PC-9 (cell line): ENCODE measurements at regions of chr2 and their contacts with region 1.

Region 1: DNA sequence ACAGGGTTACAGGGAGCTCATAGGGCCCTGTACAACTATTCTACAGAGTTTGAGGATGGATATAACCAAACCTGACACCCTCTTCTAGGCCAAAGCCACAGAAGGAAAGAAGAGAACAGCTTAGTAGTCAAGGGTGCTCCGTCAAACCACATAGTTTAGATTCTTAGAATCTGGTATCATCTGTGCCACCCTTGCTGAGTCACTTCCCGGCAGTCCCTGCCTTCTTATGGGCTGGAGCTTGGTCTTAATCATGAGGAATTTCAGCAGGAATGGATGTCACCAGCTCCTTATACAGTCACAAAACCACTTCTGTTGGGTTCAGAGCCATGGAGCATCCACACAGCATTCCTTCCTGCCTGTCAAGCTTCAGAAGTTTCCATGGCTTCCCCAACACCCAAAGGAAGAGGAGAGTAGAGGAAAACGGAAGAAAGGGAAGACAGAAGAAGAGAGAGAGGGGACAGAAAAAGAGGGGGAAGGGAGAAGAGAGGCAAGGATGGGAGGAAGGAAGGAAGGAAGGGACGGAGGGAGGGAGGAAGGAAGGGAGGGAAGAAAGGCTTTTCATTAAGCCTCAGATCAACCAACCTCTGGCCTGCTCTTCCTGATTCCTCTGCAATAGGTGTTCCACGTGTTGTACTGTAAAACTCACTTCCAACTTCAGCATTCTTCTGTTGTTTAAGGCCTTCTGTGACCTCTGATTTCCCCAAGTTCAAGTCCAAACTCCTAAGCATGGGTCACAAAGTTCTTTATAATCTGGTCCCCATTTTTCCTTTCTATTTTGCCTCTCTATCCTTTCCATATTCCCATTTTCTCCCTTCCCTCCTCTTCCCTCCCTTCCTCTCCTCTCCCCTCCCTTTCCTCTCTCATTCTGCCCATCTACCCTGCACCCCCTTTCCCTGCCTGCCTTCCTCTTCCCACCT is 246.1 kb upstream of the TNP1 start:
- DNase-seq: peak; percentile 79 to 95
- H3K4me3 ChIP-seq: no peak overlapping the region
- H3K27ac ChIP-seq: peak overlapping the region; percentile 94
- H3K4me1 ChIP-seq: peaks cover 61% of the 10 kb centered on the region
- H3K27me3 ChIP-seq: no peaks in the 10 kb centered on the region
- CTCF ChIP-seq: no peak

Region 2: GRCh38 chr2:216698895-216699294 is 407.1 kb before region 1 on chr2:
- CTCF ChIA-PET with region 1: interaction called, 4 read pairs
- POLR2A ChIA-PET with region 1: no interaction called
- intact Hi-C with region 1: loop called (anchors 5 kb)
- DNase-seq: no peak
- H3K4me3 ChIP-seq: no peak overlapping the region
- H3K27ac ChIP-seq: no peak overlapping the region
- H3K4me1 ChIP-seq: 0 out of 2 replicates have a peak, but pooled peaks cover 3% of the 10 kb centered on the region
- H3K27me3 ChIP-seq: no peaks in the 10 kb centered on the region
- CTCF ChIP-seq: peak; percentile 67

Region 3: GRCh38 chr2:217086038-217086522 is 19.9 kb before region 1 on chr2:
- CTCF ChIA-PET with region 1: no interaction called
- POLR2A ChIA-PET with region 1: interaction called, 11 read pairs
- intact Hi-C with region 1: no loop called
- DNase-seq: no peak
- H3K4me3 ChIP-seq: no peak overlapping the region
- H3K27ac ChIP-seq: no peak overlapping the region
- H3K4me1 ChIP-seq: 0 out of 2 replicates have a peak, but pooled peaks cover 6% of the 10 kb centered on the region
- H3K27me3 ChIP-seq: no peaks in the 10 kb centered on the region
- CTCF ChIP-seq: no peak

Region 4: GRCh38 chr2:217277646-217278398 is 171.8 kb after region 1 on chr2:
- CTCF ChIA-PET with region 1: no interaction called
- POLR2A ChIA-PET with region 1: interaction called, 3 read pairs
- intact Hi-C with region 1: loop called (anchors 10 kb)
- DNase-seq: peak; percentile 66 to 74
- H3K4me3 ChIP-seq: no peak overlapping the region
- H3K27ac ChIP-seq: peak overlapping the region; percentile 25; the same call in 1 of the 2 replicates
- H3K4me1 ChIP-seq: peaks cover 25% of the 10 kb centered on the region; the same call in 1 of the 2 replicates
- H3K27me3 ChIP-seq: no peaks in the 10 kb centered on the region
- CTCF ChIP-seq: no peak

Region 5: GRCh38 chr2:217360781-217361482 is 254.9 kb after region 1 on chr2:
- CTCF ChIA-PET with region 1: interaction called, 4 read pairs
- POLR2A ChIA-PET with region 1: no interaction called
- intact Hi-C with region 1: loop called (anchors 2 kb)
- DNase-seq: peak; percentile 37 to 89
- H3K4me3 ChIP-seq: no peak overlapping the region
- H3K27ac ChIP-seq: peak overlapping the region; percentile 55
- H3K4me1 ChIP-seq: peaks cover 49% of the 10 kb centered on the region
- H3K27me3 ChIP-seq: no peaks in the 10 kb centered on the region
- CTCF ChIP-seq: no peak

Region 6: GRCh38 chr2:218229239-218229638 is 1123.2 kb after region 1 on chr2:
- CTCF ChIA-PET with region 1: interaction called, 12 read pairs
- POLR2A ChIA-PET with region 1: no interaction called
- intact Hi-C with region 1: no loop called
- DNase-seq: peak; percentile 33 to 83
- H3K4me3 ChIP-seq: no peak overlapping the region
- H3K27ac ChIP-seq: peak overlapping the region; percentile 81
- H3K4me1 ChIP-seq: peaks cover 32% of the 10 kb centered on the region
- H3K27me3 ChIP-seq: no peaks in the 10 kb centered on the region
- CTCF ChIP-seq: no peak